WTC11 (cell line): ENCODE measurements at regions of chr2 and their contacts with region 1.

Region 1: GRCh38 chr2:174546581-174547506 is 50.8 kb downstream of the WIPF1 start:
- DNase-seq: peak; percentile 64
- ATAC-seq: peak; percentile 99
- H3K4me3 Mint-ChIP-seq: no peak overlapping the region; the same call in 1 of the 2 replicates
- H3K27ac Mint-ChIP-seq: no peak overlapping the region
- H3K4me1 Mint-ChIP-seq: peaks cover 9% of the 10 kb centered on the region
- H3K27me3 Mint-ChIP-seq: no peaks in the 10 kb centered on the region; the same call in 1 of the 2 replicates
- CTCF ChIP-seq: no peak

Region 2: DNA sequence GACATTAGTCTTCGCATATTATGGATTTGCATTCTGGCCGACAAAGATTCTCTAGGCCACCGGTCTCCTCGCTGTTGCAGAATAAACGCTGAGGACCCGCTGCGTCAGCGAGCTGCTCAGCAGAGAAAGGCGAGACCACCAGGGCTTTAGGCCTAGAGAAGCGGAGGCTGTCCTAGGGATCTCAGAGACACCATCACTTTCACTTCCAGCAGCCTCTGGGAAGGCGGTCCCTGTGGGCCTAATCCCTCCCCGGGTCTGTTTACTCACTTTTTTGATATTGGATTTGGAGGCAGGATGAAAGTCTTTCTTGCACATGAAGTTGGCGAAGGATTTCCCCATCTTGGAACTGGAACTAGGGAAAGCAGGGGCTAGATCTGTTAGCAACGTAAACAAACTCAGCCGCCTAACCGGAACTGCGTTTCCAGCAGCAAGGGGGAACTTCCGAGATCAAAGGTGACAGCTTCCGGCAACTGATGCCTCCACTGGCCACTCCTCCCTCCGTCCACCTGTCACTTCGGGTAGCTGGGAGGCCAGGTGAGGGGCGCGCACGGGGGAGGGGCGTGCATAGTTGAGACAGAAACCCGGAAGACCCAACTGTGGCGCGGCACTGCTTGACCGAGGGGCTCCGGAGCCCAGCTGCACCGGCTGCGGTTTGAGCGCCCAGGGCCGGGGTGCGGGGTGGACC is 151.4 kb before region 1 on chr2 and contains the start of gene SCRN3:
- CTCF ChIA-PET with region 1: interaction called, 12 read pairs
- POLR2A ChIA-PET with region 1: no interaction called
- DNase-seq: peak; percentile 93
- ATAC-seq: peak; percentile 99
- H3K4me3 Mint-ChIP-seq: peak within 1 kb of the TSS; percentile 97
- H3K27ac Mint-ChIP-seq: peak within 1 kb of the TSS; percentile 98
- H3K4me1 Mint-ChIP-seq: peaks cover 11% of the 10 kb centered on the region
- H3K27me3 Mint-ChIP-seq: no peaks in the 10 kb centered on the region
- CTCF ChIP-seq: no peak
- total RNA-seq, gene SCRN3: 8.0 to 13.0 TPM (median 11.3 TPM) in 3 replicates

Region 3: DNA sequence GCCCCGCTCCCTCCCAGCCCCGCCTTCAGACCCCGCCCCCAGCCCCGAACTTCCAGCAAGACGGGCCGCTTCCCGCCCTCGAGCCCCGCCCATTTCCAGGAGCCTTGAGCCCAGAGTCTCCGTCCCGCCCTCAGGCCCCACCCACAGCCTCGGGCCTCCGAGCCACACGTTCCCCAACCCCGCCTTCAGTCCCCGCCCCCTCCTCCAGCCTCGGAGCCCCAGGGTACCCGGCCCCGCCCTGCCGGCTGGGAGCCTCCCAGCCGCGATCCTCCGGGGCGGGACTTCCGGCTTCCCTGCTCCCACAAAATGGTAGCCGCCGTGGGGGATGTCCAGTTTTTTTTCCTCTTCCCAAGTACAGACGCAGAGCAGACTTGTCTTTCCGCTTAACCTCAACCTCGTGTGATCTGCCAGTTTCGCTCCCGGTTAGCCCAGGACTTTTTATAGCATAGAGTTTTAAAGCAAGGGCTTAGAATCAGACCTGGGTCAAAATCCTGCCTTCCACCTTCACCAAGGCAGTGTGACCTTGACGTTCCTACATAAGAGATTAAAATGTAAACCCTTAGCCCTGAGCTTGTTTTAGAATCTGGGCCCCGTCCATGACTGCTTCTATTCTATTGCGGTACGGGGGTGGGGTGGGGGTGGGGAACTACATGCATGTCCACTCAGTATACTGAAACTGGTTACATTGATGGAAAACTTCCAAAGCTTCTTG is 59.6 kb before region 1 on chr2:
- CTCF ChIA-PET with region 1: interaction called, 19 read pairs
- POLR2A ChIA-PET with region 1: no interaction called
- DNase-seq: peak; percentile 100
- ATAC-seq: peak; percentile 98
- H3K4me3 Mint-ChIP-seq: peak overlapping the region; percentile 86
- H3K27ac Mint-ChIP-seq: peak overlapping the region; percentile 92
- H3K4me1 Mint-ChIP-seq: peaks cover 7% of the 10 kb centered on the region
- H3K27me3 Mint-ChIP-seq: peaks cover 45% of the 10 kb centered on the region
- CTCF ChIP-seq: no peak

Region 4: GRCh38 chr2:174510583-174511189 is 36.2 kb before region 1 on chr2:
- CTCF ChIA-PET with region 1: no interaction called
- POLR2A ChIA-PET with region 1: no interaction called
- DNase-seq: no peak
- ATAC-seq: no peak
- H3K4me3 Mint-ChIP-seq: no peak overlapping the region
- H3K27ac Mint-ChIP-seq: no peak overlapping the region
- H3K4me1 Mint-ChIP-seq: no peaks in the 10 kb centered on the region
- H3K27me3 Mint-ChIP-seq: peaks cover 28% of the 10 kb centered on the region
- CTCF ChIP-seq: no peak

Region 5: GRCh38 chr2:174536304-174536703 is 10.5 kb before region 1 on chr2:
- CTCF ChIA-PET with region 1: interaction called, 23 read pairs
- POLR2A ChIA-PET with region 1: no interaction called
- DNase-seq: no peak
- ATAC-seq: no peak
- H3K4me3 Mint-ChIP-seq: no peak overlapping the region
- H3K27ac Mint-ChIP-seq: no peak overlapping the region
- H3K4me1 Mint-ChIP-seq: no peaks in the 10 kb centered on the region
- H3K27me3 Mint-ChIP-seq: no peaks in the 10 kb centered on the region; the same call in 1 of the 2 replicates
- CTCF ChIP-seq: no peak

Region 6: GRCh38 chr2:174561283-174561971 is 14.6 kb after region 1 on chr2:
- CTCF ChIA-PET with region 1: interaction called, 12 read pairs
- POLR2A ChIA-PET with region 1: no interaction called
- DNase-seq: no peak
- ATAC-seq: peak; percentile 60
- H3K4me3 Mint-ChIP-seq: no peak overlapping the region
- H3K27ac Mint-ChIP-seq: no peak overlapping the region
- H3K4me1 Mint-ChIP-seq: peaks cover 5% of the 10 kb centered on the region; the same call in 1 of the 2 replicates
- H3K27me3 Mint-ChIP-seq: peaks cover 3% of the 10 kb centered on the region; the same call in 1 of the 2 replicates
- CTCF ChIP-seq: no peak

Region 7: GRCh38 chr2:174764280-174765255 is 217.7 kb after region 1 on chr2 and contains the start of gene CHRNA1:
- CTCF ChIA-PET with region 1: no interaction called
- POLR2A ChIA-PET with region 1: no interaction called
- DNase-seq: no peak
- ATAC-seq: 0 out of 2 replicates have a peak, but pooled peaks have one; percentile 31
- H3K4me3 Mint-ChIP-seq: no peak within 1 kb of the TSS
- H3K27ac Mint-ChIP-seq: no peak within 1 kb of the TSS
- H3K4me1 Mint-ChIP-seq: peaks cover 27% of the 10 kb centered on the region
- H3K27me3 Mint-ChIP-seq: no peaks in the 10 kb centered on the region
- CTCF ChIP-seq: no peak
- total RNA-seq, gene CHRNA1: not detected in 3 replicates